BJ (cell line): ENCODE measurements at regions of chr20 and their contacts with region 1.

Region 1: GRCh38 chr20:8315639-8316573 is 183.8 kb downstream of the PLCB1 start:
- DNase-seq: no peak
- H3K4me3 ChIP-seq: no peak overlapping the region
- H3K27me3 ChIP-seq: no peaks in the 10 kb centered on the region
- CTCF ChIP-seq: no peak

Region 2: DNA sequence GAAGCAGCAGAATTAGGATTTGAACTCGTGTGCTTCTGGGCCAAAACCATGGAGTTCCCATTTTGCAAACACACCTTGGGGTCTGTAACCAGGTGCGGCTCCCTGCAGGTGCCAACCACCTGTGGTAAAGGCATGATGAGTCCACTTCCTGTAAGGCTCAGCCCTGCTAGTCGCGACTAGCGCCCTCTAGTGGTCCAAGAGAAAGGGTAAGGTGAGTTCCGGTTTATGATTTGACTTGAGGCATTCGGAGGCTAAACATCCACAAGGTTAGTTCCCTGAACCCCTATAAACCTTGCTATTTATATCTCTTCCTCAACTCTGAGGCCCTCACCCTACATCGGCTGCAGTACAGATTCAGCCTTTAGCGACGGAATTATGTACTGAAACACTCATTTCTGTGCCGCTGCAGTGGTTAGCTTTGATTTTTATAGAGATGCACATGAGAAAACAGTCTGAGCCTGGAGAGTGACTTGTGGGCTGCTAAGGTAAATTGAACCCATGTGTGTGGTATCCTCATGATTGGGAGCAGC is 10.4 kb before region 1 on chr20:
- CTCF ChIA-PET with region 1: interaction called, 10 read pairs
- POLR2A ChIA-PET with region 1: no interaction called
- DNase-seq: no peak
- H3K4me3 ChIP-seq: no peak overlapping the region
- H3K27me3 ChIP-seq: no peaks in the 10 kb centered on the region
- CTCF ChIP-seq: peak; percentile 74

Region 3: GRCh38 chr20:8331740-8332412 is 16.0 kb after region 1 on chr20:
- CTCF ChIA-PET with region 1: no interaction called
- POLR2A ChIA-PET with region 1: no interaction called
- DNase-seq: peak; percentile 8
- H3K4me3 ChIP-seq: no peak overlapping the region
- H3K27me3 ChIP-seq: no peaks in the 10 kb centered on the region
- CTCF ChIP-seq: no peak

Region 4: GRCh38 chr20:8424010-8424409 is 108.1 kb after region 1 on chr20:
- CTCF ChIA-PET with region 1: no interaction called
- POLR2A ChIA-PET with region 1: no interaction called
- DNase-seq: no peak
- H3K4me3 ChIP-seq: no peak overlapping the region
- H3K27me3 ChIP-seq: no peaks in the 10 kb centered on the region
- CTCF ChIP-seq: no peak